ENCODE measurements at regions of chr2 and their contacts with region 1.

Region 1: GRCh38 chr2:199488772-199489400 is 31.1 kb upstream of the SATB2 start:
- DNase-seq: peak; percentile 49 to 58
- ATAC-seq: peak in 1 of 2 experiments; percentile 70; a peak in 3 of 6 replicates
- H3K4me3 ChIP-seq: no peak overlapping the region
- H3K27ac ChIP-seq: no peak overlapping the region
- H3K4me1 ChIP-seq: no peaks in the 10 kb centered on the region
- CTCF ChIP-seq: peak; percentile 65
- EP300 ChIP-seq: no peak
- POLR2A ChIP-seq: no peak
- RAD21 ChIP-seq: peak; percentile 53 to 63; a peak in 4 of 5 replicates

Region 2: GRCh38 chr2:198309673-198310280 is 1179.1 kb before region 1 on chr2:
- CTCF ChIA-PET with region 1: interaction called, 45 read pairs
- POLR2A ChIA-PET with region 1: no interaction called
- DNase-seq: peak; percentile 37
- ATAC-seq: peak in 1 of 2 experiments; percentile 77; a peak in 3 of 6 replicates
- H3K4me3 ChIP-seq: no peak overlapping the region
- H3K27ac ChIP-seq: no peak overlapping the region
- H3K4me1 ChIP-seq: no peaks in the 10 kb centered on the region
- CTCF ChIP-seq: peak; percentile 82
- EP300 ChIP-seq: no peak
- POLR2A ChIP-seq: no peak
- RAD21 ChIP-seq: peak; percentile 58 to 62; a peak in 4 of 5 replicates

Region 3: GRCh38 chr2:198657512-198658121 is 831.3 kb before region 1 on chr2:
- CTCF ChIA-PET with region 1: interaction called, 23 read pairs
- POLR2A ChIA-PET with region 1: no interaction called
- DNase-seq: peak in 1 of 2 experiments; percentile 36
- ATAC-seq: no peak
- H3K4me3 ChIP-seq: no peak overlapping the region
- H3K27ac ChIP-seq: no peak overlapping the region
- H3K4me1 ChIP-seq: no peaks in the 10 kb centered on the region
- CTCF ChIP-seq: peak; percentile 43
- EP300 ChIP-seq: no peak
- POLR2A ChIP-seq: no peak
- RAD21 ChIP-seq: peak; percentile 25 to 37; a peak in 3 of 5 replicates

Region 4: DNA sequence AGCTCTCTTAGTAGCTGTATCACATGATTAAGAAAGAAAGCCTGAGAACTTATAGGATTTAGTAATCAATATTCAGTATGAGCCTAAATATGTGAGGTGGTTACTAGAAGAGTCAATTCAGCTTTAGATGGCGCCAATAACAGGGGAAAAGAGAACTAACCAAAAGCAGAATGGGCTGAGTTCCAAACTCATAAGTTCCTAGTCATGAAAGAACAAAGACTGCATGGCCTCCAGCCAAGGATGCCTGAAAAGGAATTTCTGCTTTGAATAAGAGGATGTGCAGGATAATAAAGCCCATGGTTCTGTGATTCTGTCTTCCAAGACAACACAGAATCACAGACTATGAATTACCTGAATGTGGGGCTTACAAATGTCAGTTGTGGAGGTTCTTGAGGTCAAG is 227.6 kb before region 1 on chr2:
- CTCF ChIA-PET with region 1: no interaction called
- POLR2A ChIA-PET with region 1: no interaction called
- DNase-seq: peak in 1 of 2 experiments; percentile 8
- ATAC-seq: no peak
- H3K4me3 ChIP-seq: no peak overlapping the region
- H3K27ac ChIP-seq: no peak overlapping the region
- H3K4me1 ChIP-seq: no peaks in the 10 kb centered on the region
- CTCF ChIP-seq: no peak
- EP300 ChIP-seq: no peak
- POLR2A ChIP-seq: no peak
- RAD21 ChIP-seq: no peak

Region 5: DNA sequence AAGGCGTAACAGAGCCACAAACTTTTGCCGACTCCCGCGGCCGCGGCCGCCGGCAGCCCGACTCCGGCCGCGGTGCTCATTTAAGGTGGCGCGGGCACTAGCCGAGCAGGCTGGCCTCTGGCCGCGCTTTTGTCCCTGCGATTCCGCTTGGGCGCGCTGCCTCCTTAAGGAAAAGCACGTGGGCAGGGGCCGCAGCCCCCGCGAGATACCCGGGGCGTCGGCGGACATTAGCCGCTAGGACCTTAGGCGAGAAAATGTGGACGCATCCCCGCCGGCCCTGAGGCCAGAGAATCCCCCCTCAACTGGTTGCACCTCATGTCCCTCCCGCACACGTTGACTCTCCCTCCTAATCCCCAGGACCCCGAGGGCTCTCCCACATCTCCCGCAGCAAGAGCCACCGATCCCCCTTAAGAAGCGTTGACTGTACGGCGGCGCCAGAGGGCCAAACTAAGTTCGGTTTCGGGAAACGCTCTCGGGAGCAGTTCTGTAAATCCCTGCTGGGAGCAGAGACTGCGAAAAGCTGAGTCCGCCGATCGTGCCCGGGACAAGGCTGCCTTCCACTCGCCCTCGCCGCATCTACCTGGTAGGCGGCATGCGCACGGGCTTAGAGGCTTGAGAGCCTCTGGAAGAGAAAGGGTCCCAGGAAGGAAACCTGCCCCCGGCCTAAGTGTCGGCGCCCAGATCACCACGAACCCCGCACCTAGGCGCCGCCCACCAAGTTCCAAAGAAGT is 29.4 kb before region 1 on chr2:
- CTCF ChIA-PET with region 1: interaction called, 11 read pairs
- POLR2A ChIA-PET with region 1: no interaction called
- DNase-seq: peak; percentile 71 to 96
- ATAC-seq: peak; percentile 57 to 73
- H3K4me3 ChIP-seq: peak overlapping the region; percentile 83
- H3K27ac ChIP-seq: peak overlapping the region; percentile 97 to 98
- H3K4me1 ChIP-seq: peaks cover 17% of the 10 kb centered on the region
- CTCF ChIP-seq: no peak
- EP300 ChIP-seq: no peak
- POLR2A ChIP-seq: peak; percentile 14
- RAD21 ChIP-seq: no peak

Region 6: DNA sequence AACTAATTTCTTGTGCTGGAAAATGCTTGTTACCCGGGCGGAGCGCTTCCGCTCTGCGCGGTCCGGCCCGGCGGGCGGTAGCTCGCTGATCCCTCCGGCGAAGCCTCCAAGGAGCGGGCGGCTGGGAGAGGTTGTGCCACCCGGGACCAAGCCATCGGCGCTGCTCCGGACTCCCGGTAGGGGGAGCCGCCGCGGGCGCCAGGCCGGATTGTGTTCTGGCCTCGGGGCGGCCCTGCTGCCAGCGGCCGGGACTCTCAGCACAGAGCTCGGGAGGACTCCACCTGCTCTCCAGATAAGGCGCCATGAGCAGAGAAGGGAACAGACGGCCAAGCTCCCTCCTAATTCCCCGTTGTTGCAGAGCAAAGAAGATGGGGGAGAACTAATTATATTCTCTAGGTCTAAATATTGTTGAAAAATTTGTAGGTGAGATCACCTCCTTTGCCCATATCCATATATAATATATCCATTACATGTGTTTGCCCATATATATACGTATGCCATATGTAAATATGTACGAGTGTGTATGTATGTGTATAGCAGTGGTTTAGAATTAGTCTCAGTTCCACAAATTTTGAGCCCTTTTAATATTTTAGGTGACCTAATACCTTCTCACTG is 17.3 kb before region 1 on chr2:
- CTCF ChIA-PET with region 1: interaction called, 31 read pairs
- POLR2A ChIA-PET with region 1: no interaction called
- DNase-seq: peak in 1 of 2 experiments; percentile 71
- ATAC-seq: peak; percentile 97 to 99
- H3K4me3 ChIP-seq: peak overlapping the region; percentile 35
- H3K27ac ChIP-seq: peak overlapping the region in 1 of 2 experiments; percentile 80; a peak in 3 of 6 replicates
- H3K4me1 ChIP-seq: no peaks in the 10 kb centered on the region
- CTCF ChIP-seq: peak; percentile 69
- EP300 ChIP-seq: no peak
- POLR2A ChIP-seq: no peak
- RAD21 ChIP-seq: peak in 1 of 2 experiments; percentile 46; a peak in 2 of 5 replicates